HepG2 (cell line): ENCODE measurements at regions of chr11 and their contacts with region 1.

Region 1: GRCh38 chr11:119381181-119381988 is at the start of gene USP2:
- DNase-seq: peak; percentile 93
- ATAC-seq: peak; percentile 88
- H3K4me3 ChIP-seq: peak within 1 kb of the TSS; percentile 67 to 82 (median 68)
- H3K27ac ChIP-seq: peak within 1 kb of the TSS; percentile 76
- H3K4me1 ChIP-seq: peaks cover 70% of the 10 kb centered on the region
- H3K27me3 ChIP-seq: no peaks in the 10 kb centered on the region; a peak in 1 of 5 replicates
- CTCF ChIP-seq: peak; percentile 99
- EP300 ChIP-seq: peak in 1 of 2 experiments; percentile 17; a peak in 1 of 4 replicates
- POLR2A ChIP-seq: peak in 1 of 2 experiments; percentile 61; a peak in 1 of 4 replicates
- RAD21 ChIP-seq: peak; percentile 94
- total RNA-seq, gene USP2: 6.0 and 7.2 TPM in 2 replicates

Region 2: GRCh38 chr11:119356349-119357031 is 24.9 kb before region 1 on chr11:
- CTCF ChIA-PET with region 1: interaction called, 3 read pairs
- POLR2A ChIA-PET with region 1: interaction called, 12 read pairs
- in situ Hi-C with region 1: no loop called
- intact Hi-C with region 1: no loop called
- DNase-seq: no peak
- ATAC-seq: no peak
- H3K4me3 ChIP-seq: no peak overlapping the region
- H3K27ac ChIP-seq: no peak overlapping the region
- H3K4me1 ChIP-seq: peaks cover 67% of the 10 kb centered on the region
- H3K27me3 ChIP-seq: no peaks in the 10 kb centered on the region
- CTCF ChIP-seq: peak; percentile 42; the same call in 1 of the 2 replicates
- EP300 ChIP-seq: no peak
- POLR2A ChIP-seq: no peak
- RAD21 ChIP-seq: no peak